ENCODE measurements at regions of chr20 and their contacts with region 1.

Region 1: DNA sequence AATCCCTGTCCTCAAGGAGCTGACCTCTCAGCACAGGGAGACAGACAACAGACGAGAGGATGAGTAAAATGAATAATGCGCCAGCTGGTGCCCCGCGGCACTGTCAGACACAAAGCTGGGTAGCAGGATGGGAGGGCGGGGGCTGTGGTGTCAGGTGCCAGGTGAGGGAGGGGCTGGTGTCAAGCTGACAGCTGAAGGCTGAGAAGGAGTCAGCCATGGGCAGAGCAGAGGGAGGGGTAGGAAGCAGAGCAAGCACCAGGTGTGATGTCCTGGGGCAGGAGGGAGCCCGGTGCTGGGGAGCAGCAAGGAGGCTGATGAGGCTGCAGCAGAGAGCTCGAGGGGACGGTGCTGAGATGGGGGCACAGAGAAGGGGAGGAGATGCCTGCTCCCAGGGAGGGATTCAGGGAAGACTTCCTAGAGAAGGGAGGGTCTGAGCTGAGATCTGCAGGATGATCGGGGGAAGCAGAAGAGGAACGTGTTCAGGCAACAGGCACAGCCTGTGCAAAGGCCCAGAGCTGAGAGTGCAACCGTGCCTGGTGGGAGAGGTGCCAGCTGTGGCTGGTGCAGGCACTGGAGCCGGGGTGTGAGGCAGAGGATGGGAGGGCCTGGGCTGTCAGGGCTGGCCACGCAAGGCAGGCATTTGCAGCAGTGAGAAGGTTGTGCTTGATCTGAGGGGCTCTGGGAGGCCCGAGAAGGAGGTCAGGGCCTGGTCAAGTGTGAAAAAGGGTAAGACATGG is 27.9 kb downstream of the PTGIS start:
- DNase-seq: peak in 1 of 2 donors; percentile 75
- H3K4me3 ChIP-seq: no peak overlapping the region
- CTCF ChIP-seq: no peak
- POLR2A ChIP-seq: no peak

Region 2: DNA sequence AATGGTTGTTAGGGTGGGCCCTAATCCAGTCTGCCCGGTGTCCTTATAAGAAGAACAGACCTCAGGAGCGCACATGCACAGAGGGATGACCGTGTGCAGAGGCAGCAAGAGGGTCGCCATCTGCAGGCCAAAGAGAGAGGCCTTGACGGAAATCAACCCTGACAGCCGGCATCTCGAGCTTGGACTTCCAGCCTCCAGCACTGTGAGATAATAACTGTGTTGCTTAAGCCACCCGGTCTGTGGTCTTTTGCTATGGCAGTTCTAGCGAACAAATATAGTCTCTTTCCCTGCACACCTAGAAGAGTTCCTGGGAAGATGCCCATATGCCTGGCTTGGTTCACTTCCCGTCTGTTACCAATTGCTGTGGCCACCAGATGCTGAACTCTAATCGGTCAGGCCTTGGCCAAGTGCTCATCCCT is 63.2 kb after region 1 on chr20:
- intact Hi-C with region 1: loop called (anchors 5 kb)
- DNase-seq: no peak
- H3K4me3 ChIP-seq: no peak overlapping the region
- CTCF ChIP-seq: no peak
- POLR2A ChIP-seq: no peak

Measured in lower leg skin (tissue), 4 donors.